IMR-90 (cell line): ENCODE measurements at regions of chr6 and their contacts with region 1.

Region 1: DNA sequence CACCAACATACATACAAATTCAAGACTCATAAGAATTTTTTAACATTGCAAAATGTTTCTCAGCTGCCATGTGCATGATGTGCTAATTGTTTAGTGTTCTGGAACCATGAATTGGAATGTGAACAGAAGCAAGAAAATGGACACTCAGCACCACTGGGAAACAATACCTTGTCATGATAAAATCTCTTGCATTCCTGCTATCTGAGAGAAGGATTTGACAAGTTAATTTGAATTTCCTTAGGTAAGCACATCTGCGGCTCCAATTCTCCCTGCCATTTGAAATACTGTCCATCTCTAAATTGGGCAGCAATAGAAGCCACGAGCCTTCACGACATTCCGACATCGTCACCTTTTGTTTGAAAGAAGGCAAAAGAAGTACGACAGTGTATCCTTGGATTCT is 1104.6 kb upstream of the MAP3K7 start:
- DNase-seq: no peak
- ATAC-seq: no peak
- H3K4me3 ChIP-seq: no peak overlapping the region
- H3K27ac ChIP-seq: no peak overlapping the region
- H3K4me1 ChIP-seq: no peaks in the 10 kb centered on the region
- H3K27me3 ChIP-seq: no peaks in the 10 kb centered on the region
- CTCF ChIP-seq: no peak
- POLR2A ChIP-seq: no peak
- RAD21 ChIP-seq: no peak

Region 2: GRCh38 chr6:91672201-91672600 is 19.2 kb before region 1 on chr6:
- CTCF ChIA-PET with region 1: no interaction called
- POLR2A ChIA-PET with region 1: no interaction called
- dilution Hi-C with region 1: no loop called
- in situ Hi-C with region 1: no loop called
- intact Hi-C with region 1: loop called (anchors 2 kb)
- DNase-seq: no peak
- ATAC-seq: no peak
- H3K4me3 ChIP-seq: no peak overlapping the region
- H3K27ac ChIP-seq: no peak overlapping the region
- H3K4me1 ChIP-seq: no peaks in the 10 kb centered on the region
- H3K27me3 ChIP-seq: no peaks in the 10 kb centered on the region
- CTCF ChIP-seq: no peak
- POLR2A ChIP-seq: no peak
- RAD21 ChIP-seq: no peak

Region 3: DNA sequence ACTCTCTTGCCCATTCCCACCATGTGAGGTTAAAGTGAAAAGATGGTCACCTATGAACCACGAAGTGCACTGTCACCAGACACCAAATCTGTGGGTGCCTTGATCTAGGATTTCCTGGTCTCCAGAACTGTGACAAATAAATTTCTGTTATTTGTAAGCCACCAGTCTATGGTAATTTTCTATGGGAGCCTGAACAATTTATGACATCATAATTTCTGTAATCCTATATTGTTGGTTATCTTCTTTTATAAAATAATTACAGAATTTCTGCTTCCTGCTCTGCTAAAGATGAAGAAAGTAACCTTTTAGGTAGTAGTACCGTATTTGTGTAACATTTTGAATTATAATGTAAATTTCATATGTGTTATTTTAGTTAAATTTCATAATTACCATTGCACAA is 453.5 kb after region 1 on chr6:
- CTCF ChIA-PET with region 1: no interaction called
- POLR2A ChIA-PET with region 1: no interaction called
- dilution Hi-C with region 1: no loop called
- in situ Hi-C with region 1: no loop called
- intact Hi-C with region 1: no loop called
- DNase-seq: no peak
- ATAC-seq: no peak
- H3K4me3 ChIP-seq: no peak overlapping the region
- H3K27ac ChIP-seq: no peak overlapping the region
- H3K4me1 ChIP-seq: no peaks in the 10 kb centered on the region
- H3K27me3 ChIP-seq: no peaks in the 10 kb centered on the region
- CTCF ChIP-seq: no peak
- POLR2A ChIP-seq: no peak
- RAD21 ChIP-seq: no peak